Vagina (tissue), 2 donors: ENCODE measurements at regions of chr1 and their contacts with region 1.

Region 1: DNA sequence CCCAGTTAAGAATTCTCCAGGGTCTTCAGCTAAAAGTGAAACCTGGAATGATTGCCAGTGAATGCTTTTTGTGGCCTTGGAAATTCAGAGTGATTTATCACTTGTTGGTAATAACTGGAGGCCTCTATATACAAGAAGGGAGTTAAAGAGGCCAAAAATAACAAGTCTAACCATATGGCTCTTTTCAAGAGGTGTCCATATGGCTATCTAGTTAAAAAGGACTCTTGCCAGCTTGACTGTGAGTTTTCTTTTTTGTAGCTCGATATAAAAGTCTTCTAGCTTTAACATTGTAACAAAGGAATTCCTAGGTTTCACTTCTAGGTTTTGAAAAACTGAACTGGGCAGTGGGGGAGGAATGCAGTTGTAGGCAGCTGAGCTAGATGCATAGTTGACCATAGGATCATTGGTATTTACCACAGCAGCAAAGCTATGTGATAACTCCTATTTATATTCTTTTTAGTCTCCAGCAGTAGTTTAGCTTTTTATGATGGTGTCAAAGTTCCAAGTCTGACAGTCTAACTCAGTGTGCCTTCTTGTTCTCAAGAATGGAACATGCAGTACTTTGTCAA is 44.4 kb downstream of the CACHD1 start:
- DNase-seq: no peak
- H3K4me3 ChIP-seq: no peak overlapping the region
- H3K27ac ChIP-seq: peak overlapping the region; percentile 64
- H3K4me1 ChIP-seq: peaks cover 70% of the 10 kb centered on the region
- H3K27me3 ChIP-seq: no peaks in the 10 kb centered on the region
- CTCF ChIP-seq: no peak
- POLR2A ChIP-seq: no peak

Region 2: DNA sequence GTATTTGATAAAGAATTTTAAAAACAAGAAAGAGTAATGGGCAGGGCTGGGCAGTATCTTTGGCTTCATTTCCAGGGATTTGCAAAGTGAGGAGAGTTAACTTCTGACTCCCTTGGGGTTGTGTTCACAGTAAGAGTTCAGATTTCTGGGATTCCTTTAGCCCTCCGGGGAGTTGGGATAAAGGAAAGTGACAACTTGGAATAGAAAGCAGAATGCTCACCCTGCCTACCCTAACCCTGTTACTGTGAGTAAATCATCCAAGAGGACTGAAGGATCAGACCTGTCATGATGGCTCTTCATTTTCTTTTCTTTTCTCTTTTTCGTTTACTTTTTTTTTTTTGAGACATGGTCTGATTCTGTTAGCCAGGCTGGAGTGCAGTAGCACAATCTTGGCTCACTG is 31.7 kb after region 1 on chr1:
- intact Hi-C with region 1: loop called (anchors 1 kb)
- DNase-seq: no peak
- H3K4me3 ChIP-seq: no peak overlapping the region
- H3K27ac ChIP-seq: no peak overlapping the region
- H3K4me1 ChIP-seq: peaks cover 36% of the 10 kb centered on the region
- H3K27me3 ChIP-seq: no peaks in the 10 kb centered on the region
- CTCF ChIP-seq: no peak
- POLR2A ChIP-seq: no peak